Activated B cell treated with CpG ODN at 0.5 μM for 24 hours (primary cell): ENCODE measurements at regions of chr4 and their contacts with region 1.

Region 1: GRCh38 chr4:87848622-87849351 is 16.0 kb downstream of the MEPE start:
- DNase-seq: no peak
- ATAC-seq: peak; percentile 70
- H3K4me3 Mint-ChIP-seq: no peak overlapping the region
- H3K27ac Mint-ChIP-seq: no peak overlapping the region
- H3K4me1 Mint-ChIP-seq: peaks cover 5% of the 10 kb centered on the region
- H3K27me3 Mint-ChIP-seq: peaks cover 12% of the 10 kb centered on the region
- CTCF ChIP-seq: no peak

Region 2: DNA sequence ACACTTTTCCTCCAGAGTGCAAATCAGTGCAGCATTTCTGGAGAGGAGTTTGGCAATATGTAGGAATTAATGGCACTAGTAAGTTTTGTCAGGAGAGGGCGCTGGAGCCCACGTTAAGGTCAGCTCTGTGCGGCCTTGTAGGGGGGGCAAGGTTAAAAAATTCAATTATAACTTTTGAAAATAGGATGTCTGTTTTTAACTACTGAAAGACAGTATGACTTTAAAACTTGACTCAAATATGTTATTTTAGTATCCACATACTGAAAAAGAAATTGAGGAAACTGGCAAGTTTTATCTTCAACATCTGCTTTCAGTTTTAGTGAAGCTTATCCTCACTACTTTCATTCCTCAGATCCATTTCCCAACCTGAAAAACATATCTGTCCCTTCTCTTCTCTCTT is 495.2 kb before region 1 on chr4:
- CTCF ChIA-PET with region 1: no interaction called
- POLR2A ChIA-PET with region 1: no interaction called
- intact Hi-C with region 1: loop called (anchors 2 kb)
- DNase-seq: no peak
- ATAC-seq: no peak
- H3K4me3 Mint-ChIP-seq: no peak overlapping the region
- H3K27ac Mint-ChIP-seq: no peak overlapping the region
- H3K4me1 Mint-ChIP-seq: no peaks in the 10 kb centered on the region
- H3K27me3 Mint-ChIP-seq: no peaks in the 10 kb centered on the region
- CTCF ChIP-seq: no peak

Region 3: GRCh38 chr4:87973283-87974169 is 124.7 kb after region 1 on chr4:
- CTCF ChIA-PET with region 1: interaction called, 10 read pairs
- POLR2A ChIA-PET with region 1: no interaction called
- intact Hi-C with region 1: loop called (anchors 1 kb)
- DNase-seq: no peak
- ATAC-seq: peak; percentile 47
- H3K4me3 Mint-ChIP-seq: no peak overlapping the region
- H3K27ac Mint-ChIP-seq: no peak overlapping the region
- H3K4me1 Mint-ChIP-seq: peaks cover 9% of the 10 kb centered on the region
- H3K27me3 Mint-ChIP-seq: peaks cover 9% of the 10 kb centered on the region
- CTCF ChIP-seq: no peak

Region 4: DNA sequence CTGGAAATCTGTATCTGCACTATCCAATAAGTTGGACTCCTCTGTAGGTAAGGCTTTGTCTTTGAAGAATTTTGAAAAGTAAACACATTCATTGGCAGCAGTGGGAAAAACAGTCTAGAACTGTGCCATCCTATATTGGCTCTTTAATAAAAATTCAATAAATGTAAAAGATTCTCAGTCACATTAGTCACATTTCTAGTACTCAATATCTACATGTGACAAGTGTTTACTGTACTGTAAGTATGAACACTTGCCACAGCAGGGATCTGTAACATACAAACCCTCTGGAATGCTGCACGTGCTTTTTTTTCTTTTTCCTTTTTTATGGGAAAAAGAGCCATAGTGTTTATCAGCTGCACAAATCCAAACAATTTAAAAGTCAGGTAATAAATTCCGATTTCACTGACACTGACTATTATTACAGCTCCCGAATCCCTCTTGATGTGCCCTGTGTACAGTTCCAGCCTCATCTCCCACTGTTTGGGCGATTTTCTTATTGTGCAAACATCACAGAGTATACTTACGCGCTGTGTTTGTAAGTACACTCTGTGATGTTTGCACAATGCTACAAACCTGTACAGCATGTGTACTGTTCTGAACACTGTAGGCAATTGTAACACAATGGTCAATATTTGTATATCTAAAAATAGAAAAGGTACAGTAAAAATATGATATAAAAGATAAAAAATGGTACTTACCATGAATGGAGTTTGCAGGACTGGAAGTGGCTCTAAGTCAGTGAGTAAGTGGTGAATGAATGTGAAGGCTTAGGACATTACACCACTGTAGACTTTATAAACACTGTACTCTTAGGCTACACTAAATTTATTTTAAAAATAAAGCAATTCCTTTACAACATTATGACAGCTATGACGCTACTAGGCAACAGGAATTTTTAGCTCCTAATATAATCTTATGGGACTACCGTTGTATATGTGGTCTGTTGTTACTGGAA is 666.0 kb after region 1 on chr4:
- CTCF ChIA-PET with region 1: no interaction called
- POLR2A ChIA-PET with region 1: no interaction called
- intact Hi-C with region 1: loop called (anchors 2 kb)
- DNase-seq: no peak
- ATAC-seq: no peak
- H3K4me3 Mint-ChIP-seq: no peak overlapping the region
- H3K27ac Mint-ChIP-seq: no peak overlapping the region
- H3K4me1 Mint-ChIP-seq: no peaks in the 10 kb centered on the region
- H3K27me3 Mint-ChIP-seq: no peaks in the 10 kb centered on the region
- CTCF ChIP-seq: no peak

Region 5: GRCh38 chr4:88879991-88880390 is 1031.2 kb after region 1 on chr4:
- CTCF ChIA-PET with region 1: no interaction called
- POLR2A ChIA-PET with region 1: no interaction called
- intact Hi-C with region 1: no loop called
- DNase-seq: no peak
- ATAC-seq: no peak
- H3K4me3 Mint-ChIP-seq: no peak overlapping the region
- H3K27ac Mint-ChIP-seq: no peak overlapping the region
- H3K4me1 Mint-ChIP-seq: no peaks in the 10 kb centered on the region
- H3K27me3 Mint-ChIP-seq: peaks cover 18% of the 10 kb centered on the region
- CTCF ChIP-seq: no peak